ENCODE measurements at regions of chr5 and their contacts with region 1.

Region 1: DNA sequence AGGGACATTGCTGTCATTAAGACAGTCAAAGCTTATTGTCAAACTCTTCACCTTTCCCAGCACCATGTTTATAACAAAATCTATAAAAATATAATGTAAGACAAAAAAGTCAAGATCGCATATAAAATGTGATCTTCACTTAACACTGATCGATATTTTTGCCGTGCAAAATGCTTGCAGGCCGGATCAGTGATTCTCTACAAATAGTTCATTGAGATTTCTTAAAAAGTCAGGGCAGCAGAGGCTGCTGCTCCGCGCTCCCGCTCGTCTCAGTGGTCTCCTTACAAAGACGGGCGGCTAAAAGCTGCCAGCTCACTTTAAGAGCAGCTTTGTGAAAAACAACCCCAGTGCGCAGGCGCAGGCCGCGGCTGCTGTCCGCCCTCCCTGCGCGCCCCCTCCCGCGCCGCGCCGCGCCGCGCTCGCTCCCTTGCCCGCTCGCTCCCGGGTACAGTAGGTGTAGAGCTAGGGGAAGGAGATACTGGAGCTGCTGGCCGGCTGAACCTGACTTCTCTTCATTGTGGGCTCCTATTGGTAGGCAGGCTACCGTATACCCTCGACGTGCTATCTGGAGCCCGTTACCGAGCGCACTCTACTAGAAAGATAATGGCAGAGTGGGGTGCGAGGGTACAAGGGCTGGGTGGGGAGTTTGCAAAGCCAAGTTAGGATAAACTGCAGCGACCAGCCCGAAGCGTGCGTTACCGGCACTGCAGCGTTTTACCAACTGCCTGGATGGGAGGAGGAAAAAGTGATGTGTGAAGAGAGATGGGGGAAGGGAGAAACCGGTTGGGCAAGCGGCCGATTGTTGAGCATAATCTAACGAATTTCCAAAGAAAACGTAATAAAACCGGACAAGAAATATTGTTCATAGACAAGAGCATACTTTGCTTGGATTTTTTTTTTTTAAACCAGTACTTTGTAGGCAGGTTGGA is at the start of gene ARRDC3:
- DNase-seq: peak; percentile 59
- H3K4me3 ChIP-seq: peak within 1 kb of the TSS; percentile 86
- CTCF ChIP-seq: no peak

Region 2: DNA sequence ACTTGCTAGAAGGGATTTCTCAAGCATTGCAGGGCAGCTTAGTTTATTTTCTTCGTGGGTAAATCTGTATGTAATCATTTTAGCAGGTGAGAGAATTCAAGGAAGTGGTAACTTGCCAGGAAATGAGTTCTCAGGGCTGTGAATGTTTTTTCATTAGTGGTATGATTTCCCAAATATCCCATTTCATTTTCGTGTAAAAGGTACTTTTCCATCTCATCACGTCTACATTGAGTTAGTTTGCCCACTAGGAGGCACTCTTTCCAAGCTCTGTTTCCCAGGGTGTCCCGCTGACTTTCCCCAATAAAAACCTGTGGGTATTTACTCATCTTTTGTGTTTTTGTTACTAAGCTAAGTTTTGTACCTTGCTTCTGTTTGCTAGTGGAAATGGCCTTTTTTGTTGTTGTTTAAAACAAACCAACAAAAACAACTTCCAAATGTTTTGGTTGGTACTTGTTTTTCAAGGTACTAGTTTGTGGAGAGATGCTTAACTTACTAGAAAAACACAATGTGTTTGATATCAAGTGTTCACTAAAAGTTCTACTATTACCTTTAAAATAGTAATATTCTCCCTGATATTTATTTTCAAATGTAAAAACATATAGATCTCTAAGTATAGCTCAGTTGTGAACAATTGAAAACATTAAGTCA is 451.1 kb before region 1 on chr5:
- CTCF ChIA-PET with region 1: interaction called, 159 read pairs
- POLR2A ChIA-PET with region 1: interaction called, 3 read pairs
- DNase-seq: no peak
- H3K4me3 ChIP-seq: no peak overlapping the region
- CTCF ChIP-seq: peak; percentile 46

Region 3: DNA sequence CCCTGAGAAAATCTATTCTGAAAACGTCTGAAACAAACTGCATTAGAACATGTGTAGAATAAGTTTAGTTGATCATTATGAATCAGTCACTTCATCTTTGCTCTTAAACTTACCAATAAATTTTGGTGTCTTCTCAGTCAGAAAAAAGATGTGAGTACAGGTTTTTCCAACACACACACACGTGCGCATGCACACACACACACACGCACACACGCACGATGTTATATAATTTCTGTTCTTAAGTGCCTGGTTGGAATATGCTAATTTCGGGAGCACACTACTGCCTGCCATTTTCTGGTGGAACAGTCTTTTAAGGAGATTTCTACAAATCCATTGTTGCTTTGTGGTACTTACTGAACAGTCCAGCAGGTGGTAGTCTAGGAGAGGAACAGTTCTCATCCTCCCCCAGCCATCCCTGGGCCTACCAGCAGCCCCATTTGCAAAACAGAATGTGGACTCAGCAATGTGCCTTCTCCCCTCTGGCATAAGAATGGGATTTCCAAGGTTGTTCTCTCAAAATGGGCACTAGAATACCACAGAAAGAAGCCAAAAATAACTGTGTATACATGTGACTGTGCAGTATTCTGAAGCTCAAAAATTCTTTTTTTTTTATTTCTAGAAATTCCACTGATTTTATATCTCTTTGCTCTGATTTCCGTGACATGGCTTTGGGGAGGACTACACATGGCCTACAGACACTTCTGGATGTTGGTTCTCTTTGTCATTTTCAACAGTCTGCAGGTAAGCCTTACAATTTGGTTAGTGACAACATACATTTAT is 281.5 kb before region 1 on chr5:
- CTCF ChIA-PET with region 1: interaction called, 170 read pairs
- POLR2A ChIA-PET with region 1: interaction called, 7 read pairs
- DNase-seq: no peak
- H3K4me3 ChIP-seq: no peak overlapping the region
- CTCF ChIP-seq: peak; percentile 73

Region 4: DNA sequence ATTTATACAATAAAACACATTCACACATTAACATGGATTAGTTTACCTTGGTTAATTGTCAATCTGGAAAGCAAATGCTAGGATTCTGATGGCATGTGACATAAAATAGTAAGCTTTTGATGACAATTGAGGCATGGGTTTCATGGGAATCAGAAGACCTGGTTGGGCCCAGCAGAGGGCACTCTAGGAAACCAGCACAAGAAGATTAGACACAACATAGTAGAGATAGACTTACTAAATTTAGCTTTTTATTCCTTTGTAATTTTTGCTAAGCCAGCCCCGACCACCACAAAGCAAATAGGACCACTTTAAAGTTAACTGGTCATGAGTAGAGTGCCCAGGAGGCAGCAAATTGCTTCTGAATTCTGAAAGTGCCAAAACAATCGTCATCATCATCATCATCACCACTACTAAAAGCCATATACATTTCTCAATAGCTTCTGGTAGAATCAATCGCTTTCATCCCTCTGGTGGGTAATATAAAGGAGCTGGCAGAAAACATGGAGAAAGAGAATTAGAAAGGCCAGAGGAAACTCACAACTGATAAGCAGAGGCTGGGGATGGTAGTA is 163.4 kb before region 1 on chr5:
- CTCF ChIA-PET with region 1: interaction called, 38 read pairs
- POLR2A ChIA-PET with region 1: no interaction called
- DNase-seq: no peak
- H3K4me3 ChIP-seq: no peak overlapping the region
- CTCF ChIP-seq: peak; percentile 9

Region 5: GRCh38 chr5:91280362-91281269 is 102.7 kb before region 1 on chr5:
- CTCF ChIA-PET with region 1: interaction called, 8 read pairs
- POLR2A ChIA-PET with region 1: interaction called, 21 read pairs
- DNase-seq: peak; percentile 90
- H3K4me3 ChIP-seq: peak overlapping the region; percentile 60
- CTCF ChIP-seq: no peak

Region 6: DNA sequence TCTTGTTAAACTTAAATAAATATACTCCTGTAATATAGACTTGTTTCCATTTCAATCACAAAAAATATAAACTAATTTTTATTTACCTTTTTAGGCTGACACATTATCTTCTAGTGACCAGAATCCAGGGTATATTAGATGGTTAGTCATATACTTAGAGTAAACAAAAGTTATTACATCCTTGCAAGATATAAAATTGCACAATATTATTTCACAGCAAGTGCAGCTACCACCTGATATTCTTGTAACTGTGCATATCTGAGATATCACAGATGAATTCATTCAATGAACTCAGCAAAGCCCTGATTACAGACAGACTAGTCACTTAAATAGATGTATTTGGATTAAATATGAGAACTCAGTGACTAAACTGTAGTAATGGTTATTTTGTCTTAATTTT is 25.4 kb after region 1 on chr5:
- CTCF ChIA-PET with region 1: interaction called, 88 read pairs
- POLR2A ChIA-PET with region 1: interaction called, 3 read pairs
- DNase-seq: no peak
- H3K4me3 ChIP-seq: no peak overlapping the region
- CTCF ChIP-seq: no peak

Region 7: GRCh38 chr5:91443023-91443422 is 59.7 kb after region 1 on chr5:
- CTCF ChIA-PET with region 1: no interaction called
- POLR2A ChIA-PET with region 1: no interaction called
- DNase-seq: peak; percentile 33
- H3K4me3 ChIP-seq: no peak overlapping the region
- CTCF ChIP-seq: no peak

Region 8: DNA sequence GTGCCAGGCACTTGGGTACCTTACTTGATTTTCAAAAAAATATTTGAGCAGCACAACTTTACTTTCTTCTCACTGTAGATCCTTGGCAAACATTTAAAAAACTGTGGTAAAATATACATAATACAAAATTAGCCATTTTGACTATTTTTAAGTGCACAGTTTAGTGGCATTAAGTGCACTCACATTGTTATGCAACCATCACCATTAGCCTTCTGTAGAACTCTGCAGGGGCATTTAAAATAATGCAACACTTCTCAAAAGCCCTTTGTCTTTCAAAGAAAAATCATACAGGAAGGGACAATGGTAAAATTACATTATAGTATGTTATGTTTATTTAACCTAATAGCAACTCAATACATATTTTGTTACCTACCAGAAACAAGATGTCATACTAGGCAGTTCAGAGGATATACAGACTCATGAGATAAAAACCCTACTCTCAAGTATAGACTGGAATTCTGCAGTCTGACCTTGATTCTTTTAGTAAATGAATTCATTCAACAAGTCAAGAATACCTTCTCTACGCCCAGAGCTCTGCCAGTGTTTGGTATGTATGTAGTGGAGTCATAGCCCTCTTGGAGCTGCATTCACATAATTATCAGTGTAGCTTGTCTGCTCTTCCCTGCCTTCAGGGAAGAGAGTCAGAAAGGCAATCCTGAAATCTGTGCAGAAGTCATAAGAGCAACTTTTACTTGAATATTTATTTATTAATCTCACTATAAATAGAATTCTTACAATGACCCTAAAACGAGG is 73.8 kb after region 1 on chr5:
- CTCF ChIA-PET with region 1: no interaction called
- POLR2A ChIA-PET with region 1: no interaction called
- DNase-seq: no peak
- H3K4me3 ChIP-seq: no peak overlapping the region
- CTCF ChIP-seq: no peak

Region 9: GRCh38 chr5:91641730-91642350 is 258.5 kb after region 1 on chr5:
- CTCF ChIA-PET with region 1: no interaction called
- POLR2A ChIA-PET with region 1: no interaction called
- DNase-seq: no peak
- H3K4me3 ChIP-seq: no peak overlapping the region
- CTCF ChIP-seq: peak; percentile 18

Region 10: DNA sequence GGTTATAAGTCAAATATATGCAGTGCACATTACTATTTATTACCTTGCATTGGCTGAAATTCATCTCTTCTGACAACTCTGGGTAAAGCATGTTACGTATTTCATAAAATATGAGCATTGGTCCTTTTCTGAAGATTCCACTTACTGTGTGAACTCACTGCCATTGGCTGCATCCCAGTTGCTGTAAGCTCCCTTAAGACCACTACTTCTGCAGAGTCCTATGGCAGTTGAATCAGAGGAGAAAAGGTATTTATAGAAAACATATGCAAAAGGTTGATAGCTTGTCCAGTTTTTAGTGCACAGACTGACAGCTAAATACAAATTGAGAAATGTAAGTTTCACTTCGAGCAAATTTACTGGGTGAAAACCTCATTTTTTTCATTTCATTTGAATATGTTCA is 394.4 kb after region 1 on chr5:
- CTCF ChIA-PET with region 1: no interaction called
- POLR2A ChIA-PET with region 1: no interaction called
- DNase-seq: no peak
- H3K4me3 ChIP-seq: no peak overlapping the region
- CTCF ChIP-seq: no peak

Measured in AG04449 (cell line).